Stomach (tissue), 19 donors: ENCODE measurements at regions of chr13 and their contacts with region 1.

Region 1: DNA sequence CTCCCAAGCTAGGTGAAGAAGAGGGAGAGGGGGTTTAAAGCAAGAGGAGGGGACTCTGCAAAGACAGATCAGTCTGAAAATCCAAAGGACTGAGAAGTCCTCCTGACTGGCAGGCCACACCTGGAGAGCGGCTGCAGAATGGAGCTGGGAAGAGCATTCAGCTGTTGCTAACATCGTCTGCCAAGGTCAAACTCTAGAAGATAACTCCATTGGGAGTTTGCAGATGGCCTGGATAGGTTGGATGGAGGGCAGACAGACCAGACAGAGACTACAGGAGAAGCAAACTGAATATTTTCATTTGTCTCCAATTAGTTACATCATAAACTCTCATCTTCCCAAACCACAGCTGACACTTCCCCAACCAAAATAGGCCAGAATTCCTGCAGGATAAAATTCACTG is 19.9 kb upstream of the SHISA2 start:
- DNase-seq: no peak
- H3K4me3 ChIP-seq: no peak overlapping the region
- H3K27ac ChIP-seq: no peak overlapping the region
- H3K4me1 ChIP-seq: no peaks in the 10 kb centered on the region
- H3K27me3 ChIP-seq: peaks cover 0 to 25% (median 7%) of the 10 kb centered on the region in 3 donors
- CTCF ChIP-seq: no peak
- EP300 ChIP-seq: no peak
- POLR2A ChIP-seq: no peak

Region 2: DNA sequence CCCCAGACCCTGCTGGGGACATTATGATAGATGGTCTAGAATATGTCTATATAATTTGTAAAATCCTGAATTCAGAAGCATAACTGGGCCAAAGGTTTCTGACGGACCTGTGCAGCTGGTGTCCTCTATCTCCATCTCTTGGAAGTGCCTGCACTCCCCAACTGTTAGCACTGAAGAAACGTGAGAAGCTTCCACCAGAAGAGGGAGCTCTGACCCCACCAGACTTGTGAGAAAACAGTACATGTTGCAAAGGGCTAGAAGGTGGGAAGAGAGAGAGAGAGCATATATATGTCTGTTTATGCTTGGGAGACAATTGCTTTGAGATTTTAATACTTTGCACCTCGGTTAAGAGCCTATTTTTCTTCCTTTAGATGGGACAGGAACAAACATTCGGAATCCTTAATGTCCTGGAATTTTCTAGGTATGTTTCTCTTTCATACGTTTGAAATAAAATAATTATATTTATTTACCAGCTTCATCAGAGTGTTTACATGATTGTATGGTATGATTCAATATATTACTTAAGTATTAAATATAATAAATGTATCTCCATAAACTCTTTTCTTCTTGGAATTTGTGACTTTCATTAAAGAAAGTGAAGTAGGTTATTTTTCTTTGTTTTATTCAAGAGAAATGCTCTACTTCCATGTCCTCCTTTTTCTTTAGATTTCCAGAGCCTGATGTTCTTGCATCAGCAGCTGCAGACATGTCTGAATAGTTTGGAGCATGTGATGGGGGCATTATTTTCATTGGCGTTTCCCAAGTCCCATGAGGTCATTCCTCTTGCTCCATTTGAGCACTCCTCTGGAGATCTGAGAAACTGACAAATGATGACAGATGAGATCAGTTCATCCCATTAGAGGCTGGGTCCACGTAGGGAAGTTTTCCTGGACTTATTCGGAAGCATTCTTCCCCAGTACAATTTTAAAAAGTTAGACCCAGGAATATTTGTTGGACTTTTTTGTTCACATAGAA is 497.0 kb before region 1 on chr13:
- intact Hi-C with region 1: loop called (anchors 2 kb)
- DNase-seq: peak; percentile 81 to 95
- H3K4me3 ChIP-seq: no peak overlapping the region
- H3K27ac ChIP-seq: no peak overlapping the region
- H3K4me1 ChIP-seq: no peaks in the 10 kb centered on the region
- H3K27me3 ChIP-seq: no peaks in the 10 kb centered on the region
- CTCF ChIP-seq: peak in 5 of 7 experiments; percentile 51 to 80 (median 64)
- EP300 ChIP-seq: no peak
- POLR2A ChIP-seq: no peak

Region 3: GRCh38 chr13:26253787-26254582 is 182.3 kb after region 1 on chr13 and contains the start of gene CDK8:
- intact Hi-C with region 1: no loop called
- DNase-seq: peak; percentile 88 to 97
- H3K4me3 ChIP-seq: peak within 1 kb of the TSS; percentile 83 to 97 (median 88)
- H3K27ac ChIP-seq: peak within 1 kb of the TSS; percentile 92 to 100 (median 94)
- H3K4me1 ChIP-seq: peaks cover 8 to 41% (median 25%) of the 10 kb centered on the region in 4 donors
- H3K27me3 ChIP-seq: peaks cover 0 to 4% (median 0%) of the 10 kb centered on the region in 3 donors
- CTCF ChIP-seq: no peak
- EP300 ChIP-seq: no peak
- POLR2A ChIP-seq: peak in 1 of 4 donors; percentile 45
- total RNA-seq, gene CDK8: 9.4 to 48.4 (median 21.1) TPM

Region 4: DNA sequence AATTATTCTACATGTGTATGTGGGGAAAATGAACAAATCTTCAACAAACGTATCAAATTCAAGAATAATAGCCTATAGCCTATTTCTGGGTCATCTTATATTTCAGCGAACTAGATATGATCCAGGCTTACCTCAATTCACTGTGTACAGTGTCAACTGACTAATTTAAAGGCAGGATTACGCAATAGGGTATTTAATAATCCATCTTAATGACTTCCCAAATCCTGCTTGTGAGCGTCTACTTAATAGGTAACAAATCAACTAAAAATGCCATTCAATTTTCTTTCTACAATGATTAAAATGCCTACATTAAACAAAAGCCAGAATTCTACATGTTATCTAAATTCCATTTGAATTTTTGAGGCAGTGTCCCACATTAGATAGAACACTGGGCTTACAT is 1032.9 kb after region 1 on chr13:
- intact Hi-C with region 1: no loop called
- DNase-seq: no peak
- H3K4me3 ChIP-seq: no peak overlapping the region
- H3K27ac ChIP-seq: no peak overlapping the region
- H3K4me1 ChIP-seq: peaks cover 0 to 7% (median 3%) of the 10 kb centered on the region in 4 donors
- H3K27me3 ChIP-seq: no peaks in the 10 kb centered on the region
- CTCF ChIP-seq: no peak
- EP300 ChIP-seq: no peak
- POLR2A ChIP-seq: no peak